ENCODE measurements at regions of chr18 and their contacts with region 1.

Region 1: GRCh38 chr18:40789286-40789685 is 1165.7 kb upstream of the PIK3C3 start:
- DNase-seq: no peak
- ATAC-seq: no peak
- H3K4me3 ChIP-seq: no peak overlapping the region
- H3K27ac ChIP-seq: no peak overlapping the region
- H3K4me1 ChIP-seq: no peaks in the 10 kb centered on the region
- H3K27me3 ChIP-seq: no peaks in the 10 kb centered on the region
- CTCF ChIP-seq: no peak

Region 2: GRCh38 chr18:40841467-40841866 is 52.2 kb after region 1 on chr18:
- intact Hi-C with region 1: loop called in 1 of 10 experiments (anchors 10 kb)
- DNase-seq: no peak
- ATAC-seq: no peak
- H3K4me3 ChIP-seq: no peak overlapping the region
- H3K27ac ChIP-seq: no peak overlapping the region
- H3K4me1 ChIP-seq: no peaks in the 10 kb centered on the region
- H3K27me3 ChIP-seq: no peaks in the 10 kb centered on the region
- CTCF ChIP-seq: no peak

Measured in heart right ventricle (tissue), 16 donors.